GM10248 (cell line): ENCODE measurements at regions of chr6 and their contacts with region 1.

Region 1: GRCh38 chr6:6315660-6316059 is 4.8 kb downstream of the F13A1 start:
- DNase-seq: peak; percentile 39
- CTCF ChIP-seq: peak; percentile 82

Region 2: GRCh38 chr6:6230288-6230687 is 85.4 kb before region 1 on chr6:
- CTCF ChIA-PET with region 1: no interaction called
- POLR2A ChIA-PET with region 1: no interaction called
- DNase-seq: no peak
- CTCF ChIP-seq: no peak

Region 3: DNA sequence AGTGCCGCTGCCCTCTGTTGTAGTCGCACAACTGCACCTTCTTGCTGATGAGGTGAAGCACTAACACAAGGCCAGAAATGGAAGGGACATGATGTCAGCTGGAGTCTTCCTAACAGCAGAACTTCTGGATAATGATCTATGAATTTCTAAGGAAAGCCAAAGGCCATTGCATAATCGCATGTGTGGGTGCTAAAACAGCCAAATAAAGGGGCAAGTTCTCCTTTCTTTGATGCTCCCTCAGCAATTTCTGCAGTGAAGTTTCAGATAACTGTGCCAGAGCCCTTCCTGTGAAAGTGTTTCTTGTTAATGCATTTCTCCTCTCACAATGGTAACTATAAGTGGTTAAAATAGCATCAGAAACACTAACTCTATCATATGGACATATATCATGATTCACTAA is 12.8 kb after region 1 on chr6:
- CTCF ChIA-PET with region 1: interaction called, 10 read pairs
- POLR2A ChIA-PET with region 1: no interaction called
- DNase-seq: no peak
- CTCF ChIP-seq: no peak